ENCODE measurements at regions of chr1 and their contacts with region 1.

Region 1: GRCh38 chr1:77779529-77780281 is at the start of gene MIGA1:
- DNase-seq: peak; percentile 71 to 96 (median 88)
- ATAC-seq: peak; percentile 95 to 97
- H3K4me3 Mint-ChIP-seq: peak within 1 kb of the TSS; percentile 91 to 97 (median 94)
- H3K27ac Mint-ChIP-seq: peak within 1 kb of the TSS; percentile 92 to 96 (median 94)
- H3K4me1 Mint-ChIP-seq: peaks cover 24 to 45% (median 36%) of the 10 kb centered on the region in 4 donors
- H3K27me3 Mint-ChIP-seq: no peaks in the 10 kb centered on the region
- polyA plus RNA-seq, gene MIGA1: 7.1 to 11.8 (median 8.8) TPM

Region 2: GRCh38 chr1:77742011-77742555 is 37.6 kb before region 1 on chr1:
- POLR2A ChIA-PET with region 1: no interaction called
- DNase-seq: no peak
- ATAC-seq: no peak
- H3K4me3 Mint-ChIP-seq: no peak overlapping the region
- H3K27ac Mint-ChIP-seq: peak overlapping the region in 2 of 10 donors; percentile 36 to 43
- H3K4me1 Mint-ChIP-seq: peaks cover 21 to 44% (median 39%) of the 10 kb centered on the region in 4 donors
- H3K27me3 Mint-ChIP-seq: no peaks in the 10 kb centered on the region

Region 3: DNA sequence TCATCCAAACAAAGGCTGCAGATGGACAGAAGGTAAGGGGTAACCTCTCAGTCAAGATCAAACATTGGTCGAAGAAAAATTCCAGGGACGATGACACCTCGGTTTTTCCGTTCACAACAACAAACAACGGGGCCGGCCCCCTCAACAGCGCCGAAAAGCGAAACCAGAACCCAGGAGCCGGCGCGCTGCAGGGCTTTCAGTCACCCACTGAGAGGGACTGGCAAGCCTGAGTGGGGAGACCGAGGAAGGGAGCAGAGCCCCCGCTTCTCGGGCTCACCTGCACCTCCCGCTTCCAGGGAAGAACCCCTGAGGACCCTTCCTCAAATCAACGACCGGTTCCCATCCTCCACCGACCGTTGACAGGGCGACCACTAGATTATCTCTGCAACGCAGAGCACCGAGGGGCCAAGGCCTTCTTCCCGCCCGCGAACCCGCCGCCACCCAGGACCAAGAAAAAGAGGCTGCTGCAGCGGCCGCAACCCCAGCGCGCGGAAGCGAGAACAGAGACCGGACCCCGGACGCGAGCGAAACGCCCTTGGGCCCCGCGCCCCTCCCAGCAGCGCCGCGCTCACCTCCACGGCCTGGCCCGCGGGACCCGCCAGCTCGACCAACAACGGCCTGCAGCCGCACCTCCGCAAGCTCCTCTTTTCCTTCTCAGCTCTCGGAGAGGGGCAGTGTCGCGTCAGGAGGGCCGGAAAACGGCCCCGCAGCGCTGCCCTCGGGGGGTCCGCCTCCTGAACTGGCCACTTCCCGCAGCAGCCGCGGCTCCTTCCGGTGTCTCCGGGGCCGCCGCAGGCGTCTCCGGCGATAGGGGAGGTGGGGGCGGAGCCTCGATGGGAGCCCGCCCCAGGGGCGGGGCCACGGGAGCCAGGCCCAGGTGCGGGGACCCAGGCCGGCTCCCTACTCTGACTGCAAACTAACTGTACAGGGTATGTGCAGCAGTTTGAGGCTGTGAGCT is 20.4 kb before region 1 on chr1 and contains the start of gene USP33:
- POLR2A ChIA-PET with region 1: interaction called, 22 read pairs
- DNase-seq: peak; percentile 82 to 95 (median 92)
- ATAC-seq: peak; percentile 93
- H3K4me3 Mint-ChIP-seq: peak within 1 kb of the TSS; percentile 86 to 97 (median 92)
- H3K27ac Mint-ChIP-seq: peak within 1 kb of the TSS; percentile 82 to 97 (median 92)
- H3K4me1 Mint-ChIP-seq: peaks cover 24 to 50% (median 38%) of the 10 kb centered on the region in 4 donors
- H3K27me3 Mint-ChIP-seq: no peaks in the 10 kb centered on the region
- polyA plus RNA-seq, gene USP33: 35.3 to 37.6 (median 35.8) TPM

Region 4: GRCh38 chr1:77888081-77888780 is 108.5 kb after region 1 on chr1 and contains the start of gene NEXN:
- POLR2A ChIA-PET with region 1: no interaction called
- DNase-seq: no peak
- ATAC-seq: peak in 1 of 2 donors; percentile 9
- H3K4me3 Mint-ChIP-seq: peak within 1 kb of the TSS; percentile 73 to 83 (median 78)
- H3K27ac Mint-ChIP-seq: peak within 1 kb of the TSS in 2 of 10 donors; percentile 19 to 30
- H3K4me1 Mint-ChIP-seq: peaks cover 9 to 15% (median 10%) of the 10 kb centered on the region in 4 donors
- H3K27me3 Mint-ChIP-seq: peaks cover 10 to 24% (median 21%) of the 10 kb centered on the region in 5 donors
- polyA plus RNA-seq, gene NEXN: 0.36 to 1.7 (median 0.74) TPM

Region 5: GRCh38 chr1:77978969-77979876 is 199.5 kb after region 1 on chr1 and contains the start of gene FUBP1:
- POLR2A ChIA-PET with region 1: interaction called, 12 read pairs
- DNase-seq: peak; percentile 75 to 98 (median 96)
- ATAC-seq: peak; percentile 80 to 81
- H3K4me3 Mint-ChIP-seq: no peak within 1 kb of the TSS
- H3K27ac Mint-ChIP-seq: no peak within 1 kb of the TSS
- H3K4me1 Mint-ChIP-seq: peaks cover 18 to 52% (median 46%) of the 10 kb centered on the region in 4 donors
- H3K27me3 Mint-ChIP-seq: no peaks in the 10 kb centered on the region
- polyA plus RNA-seq, gene FUBP1: 47.8 to 54.5 (median 49.0) TPM

Region 6: DNA sequence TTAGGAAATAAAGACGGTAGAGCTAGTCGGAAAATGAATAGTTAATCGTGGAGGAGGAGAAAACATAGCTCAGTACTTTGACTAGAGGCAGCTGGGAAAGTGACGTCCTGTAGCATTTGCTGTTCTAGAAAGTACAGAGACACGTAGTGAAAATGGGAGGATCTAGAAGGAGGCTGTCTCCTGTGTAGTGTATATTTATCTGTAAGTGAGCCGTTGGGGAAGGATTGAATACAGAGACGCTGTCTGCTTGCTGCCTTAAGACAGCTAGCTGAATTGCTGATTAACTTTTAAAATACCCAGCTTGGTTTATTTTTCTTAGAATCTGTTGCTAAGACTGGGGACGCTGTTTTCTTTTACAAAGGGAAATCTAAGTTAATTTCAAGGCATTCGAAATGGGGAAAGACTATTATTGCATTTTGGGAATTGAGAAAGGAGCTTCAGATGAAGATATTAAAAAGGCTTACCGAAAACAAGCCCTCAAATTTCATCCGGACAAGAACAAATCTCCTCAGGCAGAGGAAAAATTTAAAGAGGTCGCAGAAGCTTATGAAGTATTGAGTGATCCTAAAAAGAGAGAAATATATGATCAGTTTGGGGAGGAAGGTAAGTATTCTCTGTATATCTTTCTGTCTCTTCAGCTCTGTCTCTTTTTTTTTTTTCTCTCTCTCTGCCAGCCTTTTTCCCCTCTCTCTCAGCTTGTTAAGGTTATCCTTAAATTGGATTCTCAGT is 225.2 kb after region 1 on chr1 and contains the start of gene DNAJB4:
- POLR2A ChIA-PET with region 1: interaction called, 11 read pairs
- DNase-seq: peak; percentile 20 to 91 (median 74)
- ATAC-seq: peak; percentile 97 to 99
- H3K4me3 Mint-ChIP-seq: peak within 1 kb of the TSS; percentile 88 to 98 (median 93)
- H3K27ac Mint-ChIP-seq: peak within 1 kb of the TSS; percentile 97 to 100 (median 99)
- H3K4me1 Mint-ChIP-seq: peaks cover 15 to 50% (median 38%) of the 10 kb centered on the region in 4 donors
- H3K27me3 Mint-ChIP-seq: peaks cover 0 to 2% (median 0%) of the 10 kb centered on the region in 5 donors
- polyA plus RNA-seq, gene DNAJB4: 3.7 to 6.3 (median 5.8) TPM

Region 7: DNA sequence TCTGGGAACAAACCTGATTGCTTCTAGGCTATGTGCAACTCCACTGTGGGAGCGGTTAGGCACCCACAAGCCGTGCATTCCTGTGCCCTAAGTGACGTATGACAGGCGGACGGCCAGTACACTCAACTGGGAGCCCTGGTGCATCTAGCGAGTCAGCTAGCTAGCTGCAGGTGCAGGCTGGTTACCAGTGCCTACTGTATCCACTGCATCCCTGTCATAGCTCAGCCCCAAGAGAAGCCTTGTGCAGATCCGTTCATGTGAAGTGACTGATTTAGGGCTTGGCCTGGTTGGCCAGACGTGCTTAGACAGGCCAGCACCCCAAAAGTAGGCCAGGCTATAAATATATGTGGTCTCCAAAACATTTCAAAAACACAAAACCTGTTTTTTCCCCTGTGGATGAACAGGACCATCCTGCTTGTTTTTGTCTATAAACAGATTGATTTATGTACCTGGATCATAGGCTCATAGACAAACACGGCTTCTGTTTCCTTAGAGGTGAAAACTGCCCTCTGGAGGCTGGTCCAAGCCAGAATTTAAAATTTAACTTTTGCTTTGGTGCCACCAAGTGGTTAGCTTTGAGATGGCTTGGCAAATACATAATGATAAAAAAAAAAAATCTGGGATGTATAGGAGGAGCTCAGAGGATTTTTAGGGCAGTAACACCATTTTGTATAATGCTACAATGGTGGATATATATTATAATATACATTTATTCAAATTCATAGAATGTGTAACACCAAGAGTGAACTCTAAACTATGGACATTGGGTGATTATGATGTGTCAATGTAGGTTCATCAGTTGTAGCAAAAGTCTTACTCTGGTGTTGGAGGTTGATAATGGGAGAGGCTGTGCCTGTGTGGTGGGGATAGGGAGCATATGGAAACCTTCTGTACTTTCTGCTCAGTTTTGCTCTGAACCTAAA is 334.6 kb after region 1 on chr1:
- POLR2A ChIA-PET with region 1: no interaction called
- DNase-seq: peak in 9 of 10 donors; percentile 28 to 69 (median 61)
- ATAC-seq: peak; percentile 89 to 90
- H3K4me3 Mint-ChIP-seq: no peak overlapping the region
- H3K27ac Mint-ChIP-seq: no peak overlapping the region
- H3K4me1 Mint-ChIP-seq: no peaks in the 10 kb centered on the region
- H3K27me3 Mint-ChIP-seq: no peaks in the 10 kb centered on the region

Measured in naive thymus-derived CD8-positive, alpha-beta T cell (primary cell).